IMR-90 (cell line): ENCODE measurements at regions of chr5 and their contacts with region 1.

Region 1: GRCh38 chr5:55680353-55680752 is 31.8 kb downstream of the SLC38A9 start:
- DNase-seq: no peak
- ATAC-seq: no peak
- H3K4me3 ChIP-seq: no peak overlapping the region
- H3K27ac ChIP-seq: no peak overlapping the region
- H3K4me1 ChIP-seq: peaks cover 2% of the 10 kb centered on the region
- H3K27me3 ChIP-seq: no peaks in the 10 kb centered on the region
- CTCF ChIP-seq: no peak
- POLR2A ChIP-seq: no peak
- RAD21 ChIP-seq: no peak

Region 2: GRCh38 chr5:55407059-55407684 is 273.2 kb before region 1 on chr5:
- CTCF ChIA-PET with region 1: interaction called, 3 read pairs
- POLR2A ChIA-PET with region 1: no interaction called
- dilution Hi-C with region 1: no loop called
- in situ Hi-C with region 1: loop called (anchors 5 kb)
- intact Hi-C with region 1: no loop called
- DNase-seq: peak; percentile 64
- ATAC-seq: peak; percentile 87
- H3K4me3 ChIP-seq: no peak overlapping the region
- H3K27ac ChIP-seq: no peak overlapping the region
- H3K4me1 ChIP-seq: 0 out of 2 replicates have a peak, but pooled peaks cover 2% of the 10 kb centered on the region
- H3K27me3 ChIP-seq: no peaks in the 10 kb centered on the region
- CTCF ChIP-seq: peak; percentile 79
- POLR2A ChIP-seq: no peak
- RAD21 ChIP-seq: peak; percentile 85

Region 3: GRCh38 chr5:56152437-56152836 is 472.1 kb after region 1 on chr5:
- CTCF ChIA-PET with region 1: no interaction called
- POLR2A ChIA-PET with region 1: interaction called, 12 read pairs
- dilution Hi-C with region 1: no loop called
- in situ Hi-C with region 1: no loop called
- intact Hi-C with region 1: no loop called
- DNase-seq: no peak
- ATAC-seq: no peak
- H3K4me3 ChIP-seq: no peak overlapping the region
- H3K27ac ChIP-seq: no peak overlapping the region
- H3K4me1 ChIP-seq: peaks cover 17% of the 10 kb centered on the region
- H3K27me3 ChIP-seq: no peaks in the 10 kb centered on the region
- CTCF ChIP-seq: no peak
- POLR2A ChIP-seq: no peak
- RAD21 ChIP-seq: no peak